Testis (tissue), 5 donors: ENCODE measurements at regions of chr11 and their contacts with region 1.

Region 1: GRCh38 chr11:1694064-1694845 is 2.7 kb upstream of the KRTAP5-6 start:
- DNase-seq: peak; percentile 92
- H3K4me3 ChIP-seq: peak overlapping the region in 1 of 2 donors; percentile 50
- H3K27ac ChIP-seq: peak overlapping the region in 1 of 2 donors; percentile 69
- H3K4me1 ChIP-seq: peaks cover 8% of the 10 kb centered on the region
- H3K27me3 ChIP-seq: no peaks in the 10 kb centered on the region
- CTCF ChIP-seq: peak; percentile 91 to 95 (median 93)
- POLR2A ChIP-seq: no peak

Region 2: DNA sequence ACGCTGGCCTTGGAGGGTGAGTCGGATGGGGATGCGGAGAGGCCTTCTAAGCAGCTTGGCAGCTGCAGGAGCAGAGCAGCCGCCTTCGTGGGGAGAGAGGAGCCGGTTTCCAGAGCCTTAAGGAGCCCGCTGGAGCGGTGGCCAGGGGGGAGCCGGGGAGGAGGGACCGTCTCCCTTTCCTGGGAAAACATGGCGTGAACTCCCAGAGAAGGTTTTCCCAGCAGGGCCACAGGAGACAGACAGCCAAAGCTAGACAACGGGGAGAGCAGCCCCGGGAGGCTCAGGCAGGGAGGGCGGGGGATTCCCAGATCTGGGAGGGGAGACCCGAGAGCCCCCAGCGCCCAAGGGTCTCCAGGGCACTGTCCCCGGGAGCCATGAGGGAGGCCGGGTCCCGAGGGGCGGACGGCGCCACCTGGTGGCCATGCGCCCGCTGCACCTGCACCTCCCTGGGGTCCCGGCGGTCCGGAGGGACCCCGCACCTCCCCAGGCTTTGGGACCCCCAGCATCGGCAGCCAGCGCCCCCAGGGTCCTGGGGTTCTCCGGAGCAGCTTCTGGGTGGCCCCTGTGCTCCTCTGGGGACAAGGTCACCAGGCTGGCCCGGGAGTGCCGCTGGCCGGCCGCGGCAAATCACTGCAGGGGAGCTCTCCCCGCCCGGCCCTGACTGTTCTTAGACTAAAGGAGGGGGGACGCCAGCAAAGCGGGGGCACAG is 138.1 kb after region 1 on chr11:
- intact Hi-C with region 1: loop called (anchors 5 kb)
- DNase-seq: peak; percentile 70
- H3K4me3 ChIP-seq: peak overlapping the region in 1 of 2 donors; percentile 15
- H3K27ac ChIP-seq: no peak overlapping the region
- H3K4me1 ChIP-seq: peaks cover 7% of the 10 kb centered on the region
- H3K27me3 ChIP-seq: no peaks in the 10 kb centered on the region
- CTCF ChIP-seq: peak; percentile 97 to 99 (median 99)
- POLR2A ChIP-seq: no peak

Region 3: DNA sequence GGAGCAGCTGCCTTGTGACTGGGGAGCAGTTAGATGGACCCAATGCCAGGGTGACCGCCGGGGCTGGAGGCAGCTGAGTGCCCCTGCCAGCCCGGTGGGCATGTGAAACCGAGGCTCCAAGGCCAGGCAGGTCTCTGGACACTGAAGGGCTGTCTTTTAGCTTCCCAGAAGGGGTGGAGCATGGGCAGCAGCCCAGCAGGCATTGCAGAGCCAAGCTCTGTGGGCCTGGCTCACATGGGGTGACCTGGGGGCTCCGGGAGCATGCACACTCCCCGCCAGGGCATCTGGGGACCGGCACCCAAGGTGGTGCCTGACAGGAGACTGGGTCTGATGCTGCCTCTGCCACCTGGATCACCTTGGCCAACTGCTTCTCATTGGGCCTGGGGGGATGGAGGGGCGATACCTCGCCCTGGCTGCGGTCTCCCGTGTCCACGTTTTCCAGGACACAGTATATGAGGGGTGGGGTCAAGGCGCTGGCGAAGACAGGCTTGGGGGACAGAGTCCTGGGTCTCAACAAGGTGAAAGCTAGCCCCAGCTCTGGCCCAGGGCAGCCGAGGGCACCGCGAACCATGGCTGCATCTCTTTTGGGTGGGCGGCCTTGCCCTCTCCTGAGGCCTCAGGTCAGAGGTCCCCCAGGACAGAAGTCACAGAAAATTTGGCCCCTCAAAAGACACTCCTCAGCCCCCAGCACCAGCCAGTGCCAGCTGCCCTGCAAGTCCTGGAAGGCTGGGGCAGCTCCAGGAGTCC is 463.2 kb after region 1 on chr11:
- intact Hi-C with region 1: loop called (anchors 2 kb)
- DNase-seq: no peak
- H3K4me3 ChIP-seq: no peak overlapping the region
- H3K27ac ChIP-seq: no peak overlapping the region
- H3K4me1 ChIP-seq: no peaks in the 10 kb centered on the region
- H3K27me3 ChIP-seq: no peaks in the 10 kb centered on the region
- CTCF ChIP-seq: no peak
- POLR2A ChIP-seq: no peak